Aorta (tissue), 5 donors: ENCODE measurements at regions of chr17 and their contacts with region 1.

Region 1: DNA sequence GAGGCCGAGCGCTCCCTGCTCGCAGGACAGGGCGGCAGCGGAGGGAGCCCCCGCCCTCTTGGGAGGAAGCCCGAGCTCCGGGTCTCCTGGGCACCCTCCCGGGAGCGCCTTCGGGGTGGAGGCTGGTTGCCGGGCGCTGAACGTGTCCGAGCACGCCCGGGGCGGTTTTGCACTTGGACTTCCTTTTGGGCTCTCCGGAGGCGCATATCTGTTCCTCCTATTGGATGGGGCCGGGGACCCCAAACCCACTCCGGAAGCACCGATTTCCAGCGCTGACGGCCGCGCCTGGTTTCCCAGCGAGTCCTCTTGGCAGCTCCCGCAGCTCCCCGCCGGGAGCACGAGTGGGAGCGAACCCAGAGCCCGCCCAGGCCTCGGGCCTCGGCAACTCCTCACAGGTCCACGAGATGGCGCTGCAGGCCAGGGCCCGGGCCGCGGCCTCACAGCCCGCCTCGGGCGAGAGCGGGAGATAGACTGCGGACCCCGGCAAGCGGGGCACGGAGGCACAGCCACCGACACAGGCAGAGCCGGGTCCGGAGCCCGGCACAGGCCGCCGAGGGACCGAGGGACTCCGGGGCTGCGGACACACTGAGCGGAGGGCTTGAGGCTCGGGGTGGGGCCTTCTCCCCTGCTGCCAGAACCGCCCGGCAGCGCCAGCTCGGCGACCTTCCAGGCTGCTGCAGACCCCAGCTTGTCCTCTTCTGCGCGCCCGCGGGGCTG is 12.7 kb downstream of the TBX2 start:
- DNase-seq: peak; percentile 88 to 94
- ATAC-seq: peak; percentile 90
- H3K4me3 ChIP-seq: peak overlapping the region; percentile 29 to 64
- H3K27ac ChIP-seq: peak overlapping the region; percentile 38 to 97
- H3K4me1 ChIP-seq: no peaks in the 10 kb centered on the region
- H3K27me3 ChIP-seq: no peaks in the 10 kb centered on the region

Region 2: GRCh38 chr17:60720763-60721531 is 691.4 kb before region 1 on chr17:
- intact Hi-C with region 1: loop called in 1 of 2 experiments (anchors 5 kb)
- DNase-seq: no peak
- ATAC-seq: peak; percentile 75
- H3K4me3 ChIP-seq: no peak overlapping the region
- H3K27ac ChIP-seq: no peak overlapping the region
- H3K4me1 ChIP-seq: no peaks in the 10 kb centered on the region
- H3K27me3 ChIP-seq: no peaks in the 10 kb centered on the region

Region 3: GRCh38 chr17:61490540-61491412 is 78.5 kb after region 1 on chr17:
- intact Hi-C with region 1: loop called (anchors 2 to 5 kb)
- DNase-seq: no peak
- ATAC-seq: no peak
- H3K4me3 ChIP-seq: no peak overlapping the region
- H3K27ac ChIP-seq: no peak overlapping the region
- H3K4me1 ChIP-seq: peaks cover 0 to 2% of the 10 kb centered on the region in 2 donors
- H3K27me3 ChIP-seq: no peaks in the 10 kb centered on the region

Region 4: GRCh38 chr17:61551255-61551742 is 139.0 kb after region 1 on chr17:
- intact Hi-C with region 1: loop called (anchors 1 to 2 kb)
- DNase-seq: no peak
- ATAC-seq: no peak
- H3K4me3 ChIP-seq: no peak overlapping the region
- H3K27ac ChIP-seq: no peak overlapping the region
- H3K4me1 ChIP-seq: no peaks in the 10 kb centered on the region
- H3K27me3 ChIP-seq: no peaks in the 10 kb centered on the region

Region 5: DNA sequence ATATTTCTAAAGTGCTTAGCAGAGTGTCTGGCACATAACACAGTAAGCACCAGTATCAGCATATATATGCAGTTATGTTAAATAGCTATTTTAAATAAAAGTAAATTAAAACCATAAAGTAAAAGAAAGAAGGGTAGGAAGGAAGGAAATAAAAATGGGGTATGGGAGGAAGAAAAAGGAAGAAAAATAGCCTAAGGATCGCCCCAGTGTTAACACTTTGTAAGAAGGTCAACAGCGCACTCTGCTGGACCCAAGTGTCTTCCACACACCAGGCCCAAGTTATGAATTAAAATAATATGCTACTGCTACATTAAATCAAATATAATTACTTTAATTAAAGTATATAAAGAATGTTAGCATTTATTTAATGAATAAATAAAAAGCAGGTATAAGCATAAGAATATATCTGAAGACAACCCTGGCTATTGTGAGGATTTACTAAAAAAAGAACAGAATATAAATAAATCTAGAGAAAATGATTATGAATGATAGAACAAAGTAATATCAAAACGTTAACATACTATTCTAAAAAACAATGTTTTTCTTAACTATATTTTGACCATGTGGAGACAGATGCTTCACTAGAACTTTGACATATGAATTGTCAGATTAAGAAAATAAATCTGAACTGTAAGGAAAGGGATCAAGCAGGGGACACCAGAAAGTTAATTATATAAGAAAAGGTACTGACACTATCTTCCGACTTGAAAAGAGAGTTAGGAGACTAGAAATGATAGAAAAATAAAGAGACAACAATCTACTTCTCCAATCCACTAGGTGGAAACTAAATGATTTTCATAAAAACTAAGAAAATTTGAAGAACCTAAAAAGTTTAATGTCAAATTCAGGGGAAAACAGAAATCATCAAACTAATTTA is 425.1 kb after region 1 on chr17:
- intact Hi-C with region 1: loop called in 1 of 2 experiments (anchors 5 kb)
- DNase-seq: peak in 1 of 2 donors; percentile 62
- ATAC-seq: no peak
- H3K4me3 ChIP-seq: no peak overlapping the region
- H3K27ac ChIP-seq: no peak overlapping the region
- H3K4me1 ChIP-seq: no peaks in the 10 kb centered on the region
- H3K27me3 ChIP-seq: no peaks in the 10 kb centered on the region

Region 6: GRCh38 chr17:62065598-62066468 is 653.5 kb after region 1 on chr17:
- intact Hi-C with region 1: loop called in 1 of 2 experiments (anchors 10 kb)
- DNase-seq: peak; percentile 99 to 100
- ATAC-seq: peak; percentile 100
- H3K4me3 ChIP-seq: peak overlapping the region; percentile 97
- H3K27ac ChIP-seq: peak overlapping the region; percentile 92 to 94
- H3K4me1 ChIP-seq: no peaks in the 10 kb centered on the region
- H3K27me3 ChIP-seq: no peaks in the 10 kb centered on the region